Gastrocnemius medialis (tissue), 4 donors: ENCODE measurements at regions of chr7 and their contacts with region 1.

Region 1: DNA sequence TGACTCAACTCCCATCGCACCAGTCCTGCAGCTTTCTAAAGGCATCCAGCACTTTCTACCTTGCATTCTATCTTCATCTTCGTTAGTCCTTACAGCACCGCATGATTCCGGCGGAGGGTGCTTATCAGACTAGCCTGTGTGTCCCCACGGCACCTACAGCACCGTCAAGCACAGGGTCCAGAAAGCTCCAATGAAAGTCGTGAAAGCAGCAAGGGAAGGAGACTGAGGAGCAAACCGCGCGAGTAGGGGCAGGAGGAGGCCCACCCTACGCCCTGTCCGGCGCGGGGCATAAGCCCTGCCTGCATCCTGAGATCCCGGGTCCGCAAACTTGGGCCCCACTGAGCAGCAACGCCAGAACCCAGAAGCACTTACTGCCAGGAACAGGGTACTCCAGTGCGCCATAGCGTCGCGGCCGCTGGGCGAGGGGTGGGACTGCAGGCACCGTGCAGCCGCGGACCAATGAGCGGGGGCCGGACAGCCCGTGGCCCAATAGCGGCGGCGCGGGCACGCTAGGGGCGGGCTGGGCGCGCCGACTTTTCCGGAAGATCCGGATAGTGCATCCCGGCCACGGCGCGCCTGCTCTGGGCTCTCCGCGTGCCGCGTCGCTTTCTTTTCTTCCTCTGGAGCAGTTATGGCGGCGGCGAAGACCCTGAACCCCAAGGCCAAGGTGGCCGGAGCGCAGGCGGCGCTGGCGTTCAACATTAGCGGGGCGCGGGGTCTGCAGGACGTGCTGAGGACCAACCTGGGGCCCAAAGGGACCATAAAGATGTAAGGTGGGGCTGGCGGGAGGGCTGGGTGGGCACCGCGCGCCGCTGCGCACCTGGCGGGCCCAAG is 122.1 kb upstream of the VKORC1L1 start:
- DNase-seq: peak; percentile 78 to 81
- ATAC-seq: peak; percentile 93 to 95
- H3K4me3 ChIP-seq: peak overlapping the region; percentile 94 to 98 (median 96)
- H3K27ac ChIP-seq: peak overlapping the region; percentile 80 to 86 (median 82)
- H3K4me1 ChIP-seq: peaks cover 12 to 13% of the 10 kb centered on the region in 2 donors
- H3K27me3 ChIP-seq: no peaks in the 10 kb centered on the region
- CTCF ChIP-seq: peak in 3 of 5 experiments; percentile 27 to 42 (median 39)
- POLR2A ChIP-seq: peak; percentile 31 to 52

Region 2: GRCh38 chr7:65609131-65609530 is 141.6 kb before region 1 on chr7:
- in situ Hi-C with region 1: no loop called
- intact Hi-C with region 1: no loop called
- DNase-seq: no peak
- ATAC-seq: no peak
- H3K4me3 ChIP-seq: no peak overlapping the region
- H3K27ac ChIP-seq: no peak overlapping the region
- H3K4me1 ChIP-seq: no peaks in the 10 kb centered on the region
- H3K27me3 ChIP-seq: no peaks in the 10 kb centered on the region
- CTCF ChIP-seq: no peak
- POLR2A ChIP-seq: no peak

Region 3: DNA sequence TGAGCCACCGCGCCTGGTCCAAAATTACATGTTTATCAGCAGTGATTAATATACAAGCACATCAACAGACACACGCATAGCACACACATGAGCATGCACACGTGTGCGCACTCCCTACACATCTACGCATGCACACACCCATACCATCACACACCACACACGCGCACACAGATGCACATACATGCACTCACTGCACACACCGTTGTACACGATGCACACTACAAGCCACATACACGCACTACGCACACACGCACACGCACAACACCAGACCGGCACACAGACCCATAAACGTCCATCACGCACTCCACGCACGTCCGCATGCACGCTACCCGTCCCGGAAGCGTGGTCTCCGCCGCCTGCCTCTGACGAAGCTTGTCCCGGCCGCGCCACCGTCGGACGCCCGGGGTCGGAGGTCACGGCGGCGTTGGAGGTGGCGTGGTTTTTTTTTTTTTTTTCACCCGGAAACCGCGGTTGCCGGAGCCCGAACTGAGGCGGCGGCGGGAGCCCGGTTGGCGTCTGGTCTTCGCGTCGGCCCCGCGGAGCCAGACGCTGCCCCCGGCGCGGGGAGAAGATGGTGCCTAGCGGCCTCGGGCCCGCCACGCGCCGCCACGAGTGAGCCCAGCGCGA is 1170.2 kb after region 1 on chr7 and contains the start of gene TMEM248:
- in situ Hi-C with region 1: no loop called
- intact Hi-C with region 1: loop called (anchors 5 kb)
- DNase-seq: peak; percentile 68 to 85
- ATAC-seq: peak; percentile 85 to 90
- H3K4me3 ChIP-seq: peak within 1 kb of the TSS; percentile 80 to 93 (median 91)
- H3K27ac ChIP-seq: peak within 1 kb of the TSS; percentile 77 to 90 (median 84)
- H3K4me1 ChIP-seq: peaks cover 41 to 49% of the 10 kb centered on the region in 2 donors
- H3K27me3 ChIP-seq: no peaks in the 10 kb centered on the region
- CTCF ChIP-seq: peak in 1 of 5 experiments; percentile 12
- POLR2A ChIP-seq: peak; percentile 25 to 57
- total RNA-seq, gene TMEM248: 53.2 to 65.9 (median 60.3) TPM